HepG2 (cell line): ENCODE measurements at regions of chr12 and their contacts with region 1.

Region 1: GRCh38 chr12:92784795-92785562 is 82.2 kb downstream of the PLEKHG7 start:
- DNase-seq: peak; percentile 85
- ATAC-seq: peak; percentile 100
- H3K4me3 ChIP-seq: no peak overlapping the region
- H3K27ac ChIP-seq: no peak overlapping the region
- H3K4me1 ChIP-seq: no peaks in the 10 kb centered on the region
- H3K27me3 ChIP-seq: no peaks in the 10 kb centered on the region
- CTCF ChIP-seq: peak; percentile 85
- EP300 ChIP-seq: no peak
- POLR2A ChIP-seq: no peak
- RAD21 ChIP-seq: peak; percentile 75

Region 2: DNA sequence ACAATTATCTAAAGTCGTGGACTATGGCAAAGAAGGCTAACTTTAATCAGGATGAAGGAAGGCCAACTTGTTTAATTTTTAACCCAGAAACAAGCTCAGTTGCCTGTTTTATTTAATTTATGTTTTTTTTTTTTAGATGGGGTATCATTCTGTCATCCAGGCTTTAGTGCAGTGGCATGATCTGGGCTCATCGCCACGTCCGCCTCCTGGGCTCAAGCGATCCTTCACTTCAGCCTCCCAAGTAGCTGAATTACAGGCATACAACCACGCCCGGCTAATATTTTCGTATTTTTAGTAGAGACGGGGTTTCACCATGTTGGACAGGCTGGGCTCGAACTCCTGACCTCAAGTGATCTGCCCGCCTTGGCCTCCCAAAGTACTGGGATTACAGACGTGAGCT is 612.4 kb after region 1 on chr12:
- CTCF ChIA-PET with region 1: no interaction called
- POLR2A ChIA-PET with region 1: no interaction called
- in situ Hi-C with region 1: no loop called
- intact Hi-C with region 1: loop called (anchors 2 kb)
- DNase-seq: no peak
- ATAC-seq: no peak
- H3K4me3 ChIP-seq: no peak overlapping the region
- H3K27ac ChIP-seq: no peak overlapping the region
- H3K4me1 ChIP-seq: peaks cover 16% of the 10 kb centered on the region
- H3K27me3 ChIP-seq: no peaks in the 10 kb centered on the region
- CTCF ChIP-seq: no peak
- EP300 ChIP-seq: no peak
- POLR2A ChIP-seq: no peak
- RAD21 ChIP-seq: no peak

Region 3: GRCh38 chr12:93419388-93420034 is 634.5 kb after region 1 on chr12:
- CTCF ChIA-PET with region 1: interaction called, 5 read pairs
- POLR2A ChIA-PET with region 1: no interaction called
- in situ Hi-C with region 1: loop called (anchors 10 kb)
- intact Hi-C with region 1: no loop called
- DNase-seq: peak; percentile 49
- ATAC-seq: peak; percentile 70
- H3K4me3 ChIP-seq: no peak overlapping the region
- H3K27ac ChIP-seq: no peak overlapping the region
- H3K4me1 ChIP-seq: peaks cover 49% of the 10 kb centered on the region
- H3K27me3 ChIP-seq: no peaks in the 10 kb centered on the region
- CTCF ChIP-seq: peak; percentile 60
- EP300 ChIP-seq: no peak
- POLR2A ChIP-seq: no peak
- RAD21 ChIP-seq: peak; percentile 42; the same call in 1 of the 2 replicates